Natural killer cell (primary cell): ENCODE measurements at regions of chr7 and their contacts with region 1.

Region 1: DNA sequence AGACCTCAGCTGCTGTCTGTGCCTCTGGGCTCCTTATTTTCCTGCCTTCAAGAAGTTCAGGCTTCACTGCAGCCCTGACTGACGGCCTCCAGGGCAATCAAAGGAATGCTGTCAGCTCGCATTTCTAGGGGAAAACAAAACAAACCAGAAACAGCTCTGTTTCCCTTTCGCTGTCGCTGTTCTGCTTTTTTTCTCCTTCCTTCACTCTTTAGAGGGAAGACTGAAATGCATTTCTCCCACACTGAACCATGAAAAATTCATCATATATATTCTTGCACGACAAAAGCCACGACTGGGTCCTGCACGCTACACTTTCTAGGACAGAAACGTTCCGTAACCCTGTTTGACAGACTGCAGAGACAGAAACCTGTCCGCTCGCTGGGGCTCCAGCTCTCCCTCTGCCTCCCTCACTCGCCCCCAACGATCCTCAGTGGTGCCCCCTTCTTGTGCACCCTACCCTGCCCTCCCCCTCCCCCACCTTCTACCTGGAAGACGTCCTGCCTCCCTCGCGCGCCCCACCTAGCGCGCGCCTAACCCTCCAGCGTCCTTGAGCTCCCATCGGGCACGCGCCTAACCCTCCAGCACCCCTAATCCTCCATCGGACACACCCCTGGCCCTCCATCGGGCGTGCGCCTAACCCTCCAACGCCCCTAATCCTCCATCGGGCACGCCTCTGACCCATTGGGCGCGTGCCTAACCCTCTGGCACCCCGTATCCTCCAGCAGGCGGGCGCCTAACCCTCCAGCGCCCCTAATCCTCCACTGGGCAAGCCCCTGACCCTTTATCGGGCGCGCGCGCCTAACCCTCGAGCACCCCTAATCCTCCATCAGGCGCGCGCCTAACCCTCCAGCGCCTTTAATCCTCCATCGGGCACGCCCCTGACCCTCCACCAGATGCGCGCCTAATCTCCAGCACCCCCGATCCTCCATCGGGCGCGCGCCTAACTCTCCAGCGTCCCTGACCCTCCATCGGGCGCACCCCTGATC is 37.1 kb downstream of the SVOPL start:
- DNase-seq: peak in 1 of 2 donors; percentile 12
- ATAC-seq: no peak
- H3K4me3 ChIP-seq: no peak overlapping the region
- H3K4me3 Mint-ChIP-seq: peak overlapping the region; percentile 9
- H3K27ac ChIP-seq: no peak overlapping the region
- H3K27ac Mint-ChIP-seq: no peak overlapping the region
- H3K4me1 ChIP-seq: peaks cover 5% of the 10 kb centered on the region
- H3K4me1 Mint-ChIP-seq: peaks cover 0 to 11% of the 10 kb centered on the region in 2 donors
- H3K27me3 ChIP-seq: peaks cover 8% of the 10 kb centered on the region
- H3K27me3 Mint-ChIP-seq: peaks cover 36 to 45% of the 10 kb centered on the region in 2 donors
- CTCF ChIP-seq: no peak

Region 2: GRCh38 chr7:138608275-138608674 is 55.7 kb before region 1 on chr7:
- intact Hi-C with region 1: loop called (anchors 10 kb)
- DNase-seq: no peak
- ATAC-seq: no peak
- H3K4me3 ChIP-seq: no peak overlapping the region
- H3K4me3 Mint-ChIP-seq: no peak overlapping the region
- H3K27ac ChIP-seq: no peak overlapping the region
- H3K27ac Mint-ChIP-seq: no peak overlapping the region
- H3K4me1 ChIP-seq: no peaks in the 10 kb centered on the region
- H3K4me1 Mint-ChIP-seq: peaks cover 5 to 11% of the 10 kb centered on the region in 2 donors
- H3K27me3 ChIP-seq: no peaks in the 10 kb centered on the region
- H3K27me3 Mint-ChIP-seq: peaks cover 0 to 4% of the 10 kb centered on the region in 2 donors
- CTCF ChIP-seq: no peak